Right ventricle myocardium inferior (tissue), 1 donor: ENCODE measurements at regions of chr4 and their contacts with region 1.

Region 1: GRCh38 chr4:151688003-151688784 is 72.6 kb downstream of the GATB start:
- DNase-seq: peak; percentile 42
- ATAC-seq: peak; percentile 36

Region 2: DNA sequence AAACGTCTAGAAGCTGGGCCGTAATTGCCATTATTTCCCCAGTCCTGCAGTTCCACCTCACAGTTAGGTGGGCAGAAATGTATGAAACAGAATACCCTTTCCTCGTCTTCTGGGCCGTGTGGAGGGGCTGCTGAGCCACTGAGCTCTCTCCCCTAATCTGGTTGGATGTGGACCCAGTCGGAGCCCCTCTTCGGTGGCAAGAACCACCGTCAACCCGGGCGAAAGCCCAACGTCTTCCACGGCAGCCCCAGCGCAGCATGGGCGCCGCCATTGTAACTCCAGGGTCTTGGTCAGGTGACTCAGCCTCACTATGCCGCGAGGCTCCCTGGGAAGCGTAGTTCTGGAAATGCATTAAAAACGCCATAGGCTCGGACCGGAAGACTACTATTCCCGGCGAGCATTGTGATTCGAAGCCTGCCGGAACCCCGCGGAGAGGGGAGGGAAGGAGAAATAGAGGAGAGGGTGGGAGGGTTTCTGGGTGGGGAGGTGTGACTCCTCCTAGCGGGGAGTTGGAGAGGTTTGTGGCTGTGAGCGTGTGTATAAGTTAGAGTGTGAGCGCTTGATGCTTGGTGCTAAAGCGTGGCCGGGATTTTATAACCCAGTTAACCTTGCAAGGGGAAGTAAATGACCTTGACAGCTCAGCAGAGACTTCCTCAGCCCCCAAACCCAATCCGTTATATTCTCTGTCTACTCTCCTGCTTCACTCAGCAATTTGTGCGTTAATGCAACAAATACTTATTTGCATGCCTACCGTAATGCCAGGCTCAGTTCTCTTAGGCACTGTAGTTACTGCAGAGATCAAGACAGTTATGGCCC is 72.7 kb after region 1 on chr4 and contains the start of gene GATB:
- intact Hi-C with region 1: loop called (anchors 2 kb)
- DNase-seq: peak; percentile 95
- ATAC-seq: peak; percentile 99
- total RNA-seq, gene GATB: 171 TPM

Region 3: GRCh38 chr4:151833174-151833573 is 145.0 kb after region 1 on chr4:
- intact Hi-C with region 1: no loop called
- DNase-seq: no peak
- ATAC-seq: no peak

Region 4: GRCh38 chr4:152032722-152033131 is 344.5 kb after region 1 on chr4:
- intact Hi-C with region 1: loop called (anchors 10 kb)
- DNase-seq: no peak
- ATAC-seq: peak; percentile 68

Region 5: DNA sequence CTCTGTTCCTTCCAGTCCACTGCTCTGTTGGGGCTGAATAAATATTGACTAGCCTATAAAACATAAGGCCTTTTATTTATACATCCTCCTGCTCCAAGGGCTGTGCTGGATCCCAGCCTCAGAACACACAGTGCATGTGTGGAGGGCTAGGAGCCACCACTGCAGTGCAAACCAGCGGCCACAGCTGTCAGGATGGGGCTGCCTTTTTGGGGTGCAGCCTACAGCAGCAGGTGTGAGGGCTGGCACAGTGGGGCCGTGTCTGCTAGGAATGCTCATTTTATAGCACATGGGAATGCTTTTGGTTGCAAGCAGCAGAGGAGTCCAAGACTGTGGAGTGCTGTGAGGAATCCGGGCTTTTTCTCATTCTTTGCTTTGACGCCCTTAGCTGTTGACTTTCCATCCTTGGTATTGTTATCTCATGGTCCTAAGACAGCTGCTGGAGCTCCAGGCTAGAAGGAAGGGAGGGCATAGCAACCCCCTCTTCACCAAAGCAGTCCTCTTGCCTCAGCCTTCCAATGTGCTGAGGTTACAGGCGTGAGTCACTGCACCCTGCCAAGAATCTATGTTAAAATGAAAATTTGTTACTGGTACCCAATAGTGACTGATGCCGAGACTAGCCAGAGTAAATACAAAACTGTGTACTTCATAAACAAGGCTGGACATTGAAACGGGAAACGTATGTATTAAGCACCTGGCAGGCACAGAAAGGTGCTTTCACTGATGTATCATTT is 406.9 kb after region 1 on chr4:
- intact Hi-C with region 1: loop called (anchors 5 kb)
- DNase-seq: no peak
- ATAC-seq: no peak

Region 6: GRCh38 chr4:152166567-152166966 is 478.4 kb after region 1 on chr4:
- intact Hi-C with region 1: no loop called
- DNase-seq: no peak
- ATAC-seq: no peak

Region 7: GRCh38 chr4:152385551-152385950 is 697.4 kb after region 1 on chr4:
- intact Hi-C with region 1: loop called (anchors 5 kb)
- DNase-seq: no peak
- ATAC-seq: no peak